Dorsolateral prefrontal cortex (tissue), 120 donors: ENCODE measurements at regions of chr5 and their contacts with region 1.

Region 1: DNA sequence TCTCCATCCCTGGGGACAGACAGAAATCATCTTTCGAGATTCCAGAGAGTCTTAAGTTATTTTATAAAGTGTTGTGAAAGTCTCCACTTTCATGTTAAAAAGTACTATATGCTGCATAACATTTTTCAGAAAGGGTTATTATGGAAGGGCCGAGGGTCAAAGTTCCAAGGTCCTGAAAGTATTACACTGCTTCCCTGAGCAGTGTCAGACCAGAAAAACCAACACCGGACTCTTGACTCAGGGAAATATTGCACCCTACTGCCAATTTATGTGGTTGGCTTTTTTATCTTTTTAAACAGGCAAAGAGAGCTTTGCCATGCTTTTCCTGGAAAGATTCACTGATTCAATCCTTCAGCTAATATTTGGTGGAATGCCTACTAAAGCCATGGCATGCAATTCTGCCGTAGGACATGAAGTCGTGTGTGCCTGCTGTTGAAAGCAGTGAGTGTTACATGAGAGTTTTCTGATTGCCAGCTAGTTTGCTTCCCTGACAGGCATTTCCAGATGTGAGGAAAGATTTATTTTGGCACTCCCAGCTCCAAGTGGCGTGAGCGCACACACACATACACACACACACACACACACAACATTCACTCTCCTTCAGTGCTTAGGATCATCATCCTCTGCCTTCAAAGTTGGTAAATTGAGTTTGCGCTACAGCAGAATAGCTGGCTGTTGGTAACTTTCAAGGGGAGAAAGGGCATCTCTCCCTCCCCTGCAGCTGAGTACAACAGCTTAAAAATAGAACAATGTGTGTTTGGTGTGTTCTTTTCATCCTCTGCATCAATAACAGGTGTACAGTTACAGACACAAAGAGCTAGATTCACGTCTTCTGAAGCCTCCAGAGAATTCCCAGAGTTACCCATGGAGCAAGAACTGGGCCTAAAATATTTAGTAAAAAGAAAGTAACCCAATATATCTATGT is 45.6 kb downstream of the SLC1A3 start:
- DNase-seq: no peak
- H3K4me3 ChIP-seq: peak overlapping the region in 10 of 59 donors; percentile 1 to 17 (median 8)
- H3K27ac ChIP-seq: peak overlapping the region in 58 of 59 donors; percentile 1 to 97 (median 73)
- H3K27me3 ChIP-seq: peaks cover 0 to 3% (median 0%) of the 10 kb centered on the region in 45 donors
- CTCF ChIP-seq: peak in 1 of 56 donors; percentile 7

Region 2: GRCh38 chr5:36611520-36612274 is 40.3 kb before region 1 on chr5:
- intact Hi-C with region 1: loop called in 1 of 2 experiments (anchors 5 kb)
- DNase-seq: peak in 1 of 10 donors; percentile 39
- H3K4me3 ChIP-seq: peak overlapping the region in 58 of 59 donors; percentile 17 to 85 (median 70)
- H3K27ac ChIP-seq: peak overlapping the region in 58 of 59 donors; percentile 25 to 99 (median 96)
- H3K27me3 ChIP-seq: peaks cover 0 to 8% (median 0%) of the 10 kb centered on the region in 45 donors
- CTCF ChIP-seq: peak in 2 of 56 donors; percentile 13 to 20